Calu3 (cell line): ENCODE measurements at regions of chr4 and their contacts with region 1.

Region 1: GRCh38 chr4:186669159-186669731 is 54.4 kb downstream of the FAT1 start:
- DNase-seq: no peak
- H3K4me3 Mint-ChIP-seq: no peak overlapping the region
- H3K27ac Mint-ChIP-seq: no peak overlapping the region
- H3K4me1 Mint-ChIP-seq: peaks cover 10% of the 10 kb centered on the region
- H3K27me3 Mint-ChIP-seq: no peaks in the 10 kb centered on the region
- CTCF ChIP-seq: peak; percentile 30

Region 2: GRCh38 chr4:186606593-186606992 is 62.7 kb before region 1 on chr4:
- CTCF ChIA-PET with region 1: no interaction called
- intact Hi-C with region 1: no loop called
- DNase-seq: no peak
- H3K4me3 Mint-ChIP-seq: no peak overlapping the region
- H3K27ac Mint-ChIP-seq: no peak overlapping the region
- H3K4me1 Mint-ChIP-seq: no peaks in the 10 kb centered on the region
- H3K27me3 Mint-ChIP-seq: no peaks in the 10 kb centered on the region
- CTCF ChIP-seq: no peak

Region 3: GRCh38 chr4:186719925-186720694 is 50.9 kb after region 1 on chr4:
- CTCF ChIA-PET with region 1: interaction called, 3 read pairs
- intact Hi-C with region 1: loop called (anchors 1 kb)
- DNase-seq: peak; percentile 44
- H3K4me3 Mint-ChIP-seq: no peak overlapping the region
- H3K27ac Mint-ChIP-seq: no peak overlapping the region
- H3K4me1 Mint-ChIP-seq: peaks cover 9% of the 10 kb centered on the region
- H3K27me3 Mint-ChIP-seq: no peaks in the 10 kb centered on the region
- CTCF ChIP-seq: no peak